ENCODE measurements at regions of chr4 and their contacts with region 1.

Region 1: DNA sequence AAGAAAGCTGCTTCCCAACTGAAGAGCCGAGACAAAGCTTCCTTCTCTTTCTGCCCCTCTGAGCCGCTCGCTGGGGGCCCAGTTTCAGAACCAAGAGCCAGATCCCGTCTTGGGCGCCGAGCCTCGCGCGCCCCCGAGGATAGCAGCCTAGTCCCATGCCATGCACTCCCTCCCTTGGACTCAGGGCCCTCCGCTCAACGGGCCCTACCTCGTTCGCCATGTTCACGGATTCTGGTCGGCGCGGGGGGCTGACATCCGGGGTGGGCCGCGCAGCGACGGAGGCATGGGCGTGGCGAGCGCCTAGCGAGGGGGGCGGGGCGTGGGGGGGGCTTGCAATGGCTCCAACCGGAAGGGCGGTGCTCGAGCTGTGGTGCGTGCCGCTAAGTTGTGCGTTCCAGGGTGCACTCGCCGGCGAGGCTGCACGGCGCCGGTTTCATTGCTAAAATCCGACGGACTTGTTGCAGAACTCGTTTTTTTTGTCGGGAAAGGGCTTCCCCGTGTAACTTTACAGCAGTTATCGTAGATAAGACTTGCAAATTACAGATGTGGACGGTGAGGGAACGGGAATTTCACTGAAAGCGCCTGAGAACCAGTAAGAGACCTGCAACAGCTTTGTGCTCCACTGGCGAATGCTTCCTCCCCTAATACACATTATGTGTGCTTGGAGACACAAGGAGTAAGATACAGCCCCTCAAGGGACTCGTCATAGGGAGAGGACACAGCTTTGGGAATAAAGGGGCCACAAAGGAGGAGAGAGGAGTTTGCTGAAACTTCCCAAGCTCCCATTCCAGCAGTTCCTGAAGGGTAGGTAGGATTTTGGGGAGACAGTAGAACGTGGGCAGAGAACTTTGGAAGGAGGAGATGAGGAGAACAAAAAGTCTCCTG is at the start of gene ADH5:
- DNase-seq: peak; percentile 95
- H3K4me3 Mint-ChIP-seq: peak within 1 kb of the TSS; percentile 96
- H3K27ac Mint-ChIP-seq: peak within 1 kb of the TSS; percentile 93
- H3K4me1 Mint-ChIP-seq: peaks cover 37% of the 10 kb centered on the region
- H3K27me3 Mint-ChIP-seq: no peaks in the 10 kb centered on the region
- total RNA-seq, gene ADH5: 112 to 119 TPM

Region 2: GRCh38 chr4:98143001-98143899 is 945.5 kb before region 1 on chr4 and contains the start of gene STPG2:
- CTCF ChIA-PET with region 1: interaction called, 4 read pairs
- POLR2A ChIA-PET with region 1: no interaction called
- intact Hi-C with region 1: loop called (anchors 1 kb)
- DNase-seq: peak; percentile 95
- H3K4me3 Mint-ChIP-seq: peak within 1 kb of the TSS; percentile 95
- H3K27ac Mint-ChIP-seq: peak within 1 kb of the TSS; percentile 98
- H3K4me1 Mint-ChIP-seq: peaks cover 20% of the 10 kb centered on the region
- H3K27me3 Mint-ChIP-seq: no peaks in the 10 kb centered on the region
- total RNA-seq, gene STPG2: not detected